Activated B cell treated with CpG ODN at 0.5 μM for 24 hours (primary cell): ENCODE measurements at regions of chr13 and their contacts with region 1.

Region 1: GRCh38 chr13:43848001-43848649 is 31.4 kb downstream of the CCDC122 start:
- DNase-seq: no peak
- ATAC-seq: no peak
- H3K4me3 Mint-ChIP-seq: no peak overlapping the region
- H3K27ac Mint-ChIP-seq: no peak overlapping the region
- H3K4me1 Mint-ChIP-seq: no peaks in the 10 kb centered on the region
- H3K27me3 Mint-ChIP-seq: no peaks in the 10 kb centered on the region
- CTCF ChIP-seq: no peak

Region 2: GRCh38 chr13:43786773-43787517 is 61.2 kb before region 1 on chr13 and contains the start of gene ENOX1:
- CTCF ChIA-PET with region 1: no interaction called
- POLR2A ChIA-PET with region 1: no interaction called
- intact Hi-C with region 1: no loop called
- DNase-seq: peak; percentile 19
- ATAC-seq: peak; percentile 39
- H3K4me3 Mint-ChIP-seq: peak within 1 kb of the TSS; percentile 79
- H3K27ac Mint-ChIP-seq: no peak within 1 kb of the TSS
- H3K4me1 Mint-ChIP-seq: peaks cover 16% of the 10 kb centered on the region
- H3K27me3 Mint-ChIP-seq: peaks cover 32% of the 10 kb centered on the region
- CTCF ChIP-seq: no peak
- total RNA-seq, gene ENOX1: not detected in 2 replicates

Region 3: DNA sequence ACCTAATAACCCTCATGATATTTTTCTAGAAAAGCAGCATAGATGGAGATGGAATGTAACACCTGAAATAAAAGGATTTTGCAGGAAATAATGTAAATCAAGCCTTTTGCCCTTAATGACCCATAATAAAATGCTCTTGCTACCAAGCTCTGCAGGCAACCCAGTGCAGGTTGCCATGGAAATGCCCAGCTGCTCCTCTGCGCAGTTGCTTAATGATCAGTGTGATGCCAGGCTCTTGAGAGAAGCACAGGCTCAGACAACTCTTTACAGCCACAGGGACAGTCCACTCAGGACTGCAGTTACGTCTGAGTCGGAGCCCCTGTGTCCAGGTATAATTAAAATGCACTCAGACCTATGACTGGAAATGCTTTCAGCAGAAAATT is 197.0 kb after region 1 on chr13:
- CTCF ChIA-PET with region 1: no interaction called
- POLR2A ChIA-PET with region 1: interaction called, 14 read pairs
- intact Hi-C with region 1: no loop called
- DNase-seq: no peak
- ATAC-seq: no peak
- H3K4me3 Mint-ChIP-seq: no peak overlapping the region
- H3K27ac Mint-ChIP-seq: no peak overlapping the region
- H3K4me1 Mint-ChIP-seq: no peaks in the 10 kb centered on the region
- H3K27me3 Mint-ChIP-seq: peaks cover 22% of the 10 kb centered on the region
- CTCF ChIP-seq: no peak

Region 4: GRCh38 chr13:44917589-44918325 is 1069.6 kb after region 1 on chr13:
- CTCF ChIA-PET with region 1: no interaction called
- POLR2A ChIA-PET with region 1: no interaction called
- intact Hi-C with region 1: no loop called
- DNase-seq: peak; percentile 96
- ATAC-seq: peak; percentile 77
- H3K4me3 Mint-ChIP-seq: no peak overlapping the region
- H3K27ac Mint-ChIP-seq: no peak overlapping the region
- H3K4me1 Mint-ChIP-seq: peaks cover 2% of the 10 kb centered on the region
- H3K27me3 Mint-ChIP-seq: no peaks in the 10 kb centered on the region
- CTCF ChIP-seq: no peak